Posterior cingulate gyrus (tissue), 11 donors: ENCODE measurements at regions of chr12 and their contacts with region 1.

Region 1: GRCh38 chr12:23169012-23169695 is 544.2 kb downstream of the ETNK1 start:
- DNase-seq: no peak

Region 2: GRCh38 chr12:23221066-23221465 is 51.9 kb after region 1 on chr12:
- intact Hi-C with region 1: loop called (anchors 10 kb)
- DNase-seq: no peak